Right cardiac atrium (tissue), 5 donors: ENCODE measurements at regions of chr7 and their contacts with region 1.

Region 1: DNA sequence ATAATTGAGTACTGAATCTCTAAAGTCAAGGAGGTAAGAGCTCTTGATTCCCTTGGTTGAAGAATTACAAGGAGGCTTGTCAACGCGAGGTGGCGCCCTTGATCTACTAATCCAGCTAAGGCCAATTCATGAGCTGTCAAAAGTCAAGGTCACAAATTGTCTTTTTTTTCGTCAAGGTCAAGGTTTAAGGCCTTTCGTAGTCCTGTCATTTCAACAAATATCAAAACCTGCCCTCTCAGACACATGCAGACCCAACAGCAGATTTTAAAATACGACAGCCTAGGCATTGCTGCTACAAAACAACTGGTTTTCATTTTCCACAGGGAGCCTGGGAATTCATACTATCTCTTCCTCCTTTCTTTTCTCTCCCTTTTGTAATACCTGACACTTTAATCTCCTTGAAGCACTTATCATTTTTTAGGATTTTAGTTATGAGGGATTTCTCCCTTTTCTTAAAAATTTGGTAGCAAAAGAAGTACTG is 3.6 kb downstream of the HOXA13 start:
- DNase-seq: peak; percentile 81 to 94 (median 90)
- ATAC-seq: no peak
- H3K4me3 ChIP-seq: no peak overlapping the region
- H3K27ac ChIP-seq: no peak overlapping the region
- H3K4me1 ChIP-seq: peaks cover 3% of the 10 kb centered on the region
- H3K27me3 ChIP-seq: no peaks in the 10 kb centered on the region

Region 2: GRCh38 chr7:26485367-26485934 is 710.9 kb before region 1 on chr7:
- intact Hi-C with region 1: no loop called
- DNase-seq: no peak
- ATAC-seq: no peak
- H3K4me3 ChIP-seq: no peak overlapping the region
- H3K27ac ChIP-seq: no peak overlapping the region
- H3K4me1 ChIP-seq: no peaks in the 10 kb centered on the region
- H3K27me3 ChIP-seq: no peaks in the 10 kb centered on the region

Region 3: DNA sequence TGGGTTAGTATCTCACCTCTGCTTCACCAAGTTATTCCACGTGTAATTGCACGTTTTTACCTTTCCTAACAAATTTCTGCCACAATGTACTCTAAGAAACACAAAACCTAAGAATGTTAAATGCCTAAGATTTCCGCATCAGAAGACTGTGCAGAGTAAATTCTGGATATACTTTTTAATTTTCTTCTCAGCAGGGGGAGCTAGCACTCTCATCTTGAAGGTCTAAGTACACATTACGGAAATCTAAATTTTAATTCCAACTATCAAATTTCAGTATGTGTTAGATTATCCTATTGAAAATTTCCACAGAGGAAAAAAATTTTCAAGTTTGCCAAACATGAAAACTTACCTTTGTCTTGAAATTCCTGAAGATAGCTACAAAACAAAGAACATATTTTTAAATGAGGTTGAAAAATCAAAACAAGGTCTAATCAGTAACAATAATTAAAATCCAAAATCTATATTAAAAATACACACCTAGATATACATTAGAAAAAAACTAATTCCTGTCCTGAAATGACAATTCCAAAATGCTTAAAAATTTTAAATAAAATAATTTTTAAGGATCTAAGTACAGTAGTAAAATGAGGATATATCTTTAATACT is 342.4 kb before region 1 on chr7:
- intact Hi-C with region 1: no loop called
- DNase-seq: no peak
- ATAC-seq: no peak
- H3K4me3 ChIP-seq: no peak overlapping the region
- H3K27ac ChIP-seq: no peak overlapping the region
- H3K4me1 ChIP-seq: no peaks in the 10 kb centered on the region
- H3K27me3 ChIP-seq: no peaks in the 10 kb centered on the region

Region 4: GRCh38 chr7:27134392-27134791 is 61.9 kb before region 1 on chr7:
- intact Hi-C with region 1: no loop called
- DNase-seq: no peak
- ATAC-seq: no peak
- H3K4me3 ChIP-seq: no peak overlapping the region
- H3K27ac ChIP-seq: no peak overlapping the region
- H3K4me1 ChIP-seq: no peaks in the 10 kb centered on the region
- H3K27me3 ChIP-seq: no peaks in the 10 kb centered on the region

Region 5: DNA sequence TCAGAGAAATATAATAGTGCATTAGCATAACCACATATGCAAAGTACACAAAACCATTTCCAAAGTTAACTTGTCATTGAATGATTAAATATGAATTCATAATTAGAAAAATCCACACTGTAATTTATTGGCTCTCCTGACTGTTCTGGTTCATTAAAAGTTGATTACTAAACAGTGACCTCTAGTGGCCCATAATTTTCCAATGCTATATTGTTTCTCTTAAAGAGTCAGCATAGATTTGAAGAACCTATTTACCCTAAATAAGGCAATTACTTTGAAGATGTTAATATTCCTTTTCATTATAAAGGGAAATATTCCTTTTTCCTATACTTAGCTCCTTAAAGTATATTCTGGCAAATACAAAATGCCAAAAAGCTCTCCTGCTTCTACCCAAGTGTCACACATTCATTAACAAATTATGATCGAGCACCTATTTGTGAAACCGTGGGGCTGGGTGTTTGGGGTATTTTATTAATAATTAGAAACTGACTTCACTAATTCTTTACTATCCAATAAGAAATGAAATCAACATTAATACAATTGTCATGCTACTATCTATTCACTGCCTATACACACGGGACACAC is 380.1 kb after region 1 on chr7:
- intact Hi-C with region 1: loop called in 1 of 4 experiments (anchors 5 kb)
- DNase-seq: no peak
- ATAC-seq: peak in 1 of 2 donors; percentile 57
- H3K4me3 ChIP-seq: no peak overlapping the region
- H3K27ac ChIP-seq: no peak overlapping the region
- H3K4me1 ChIP-seq: no peaks in the 10 kb centered on the region
- H3K27me3 ChIP-seq: no peaks in the 10 kb centered on the region

Region 6: DNA sequence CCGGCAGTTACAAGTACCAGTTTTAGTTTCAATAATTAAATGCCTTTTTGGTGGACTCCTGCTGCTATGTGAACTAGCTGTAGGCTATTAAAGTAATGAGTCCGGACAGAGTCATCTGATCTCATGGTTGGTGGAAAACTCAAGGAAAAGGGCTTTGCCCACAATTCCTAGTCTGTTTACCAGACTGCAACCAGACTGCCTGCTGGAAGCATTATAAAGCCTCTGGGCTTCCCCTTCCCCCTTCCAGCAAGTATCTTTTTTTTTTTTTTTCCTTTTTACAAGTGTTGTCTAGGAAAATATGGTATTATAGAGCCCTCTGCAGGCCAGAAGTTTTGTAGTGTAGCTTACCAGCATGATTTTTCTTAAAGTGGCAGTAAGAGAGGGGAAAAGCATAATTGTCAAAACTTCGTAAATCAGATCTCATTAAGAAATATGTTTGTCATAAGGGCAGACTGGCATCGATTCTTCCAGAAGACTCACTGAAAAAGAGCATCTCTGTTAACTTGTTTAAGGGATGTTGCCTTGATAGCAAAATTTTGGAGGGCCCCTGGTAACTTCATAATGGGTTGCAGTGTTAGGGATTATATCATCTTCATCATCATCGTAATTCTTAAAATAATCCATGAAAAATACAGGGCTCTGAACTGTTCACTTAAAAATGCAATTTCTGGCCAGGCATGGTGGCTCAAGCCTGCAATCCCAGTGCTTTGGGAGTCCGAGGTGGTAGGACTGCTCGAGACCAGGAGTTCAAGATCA is 724.9 kb after region 1 on chr7:
- intact Hi-C with region 1: loop called in 3 of 4 experiments (anchors 5 to 10 kb)
- DNase-seq: no peak
- ATAC-seq: peak; percentile 42 to 64
- H3K4me3 ChIP-seq: no peak overlapping the region
- H3K27ac ChIP-seq: no peak overlapping the region
- H3K4me1 ChIP-seq: peaks cover 9% of the 10 kb centered on the region
- H3K27me3 ChIP-seq: no peaks in the 10 kb centered on the region

Region 7: GRCh38 chr7:28020302-28020940 is 824.1 kb after region 1 on chr7:
- intact Hi-C with region 1: loop called in 2 of 4 experiments (anchors 5 to 10 kb)
- DNase-seq: peak; percentile 55 to 84 (median 77)
- ATAC-seq: peak; percentile 73 to 83
- H3K4me3 ChIP-seq: no peak overlapping the region
- H3K27ac ChIP-seq: no peak overlapping the region
- H3K4me1 ChIP-seq: peaks cover 9% of the 10 kb centered on the region
- H3K27me3 ChIP-seq: no peaks in the 10 kb centered on the region

Region 8: DNA sequence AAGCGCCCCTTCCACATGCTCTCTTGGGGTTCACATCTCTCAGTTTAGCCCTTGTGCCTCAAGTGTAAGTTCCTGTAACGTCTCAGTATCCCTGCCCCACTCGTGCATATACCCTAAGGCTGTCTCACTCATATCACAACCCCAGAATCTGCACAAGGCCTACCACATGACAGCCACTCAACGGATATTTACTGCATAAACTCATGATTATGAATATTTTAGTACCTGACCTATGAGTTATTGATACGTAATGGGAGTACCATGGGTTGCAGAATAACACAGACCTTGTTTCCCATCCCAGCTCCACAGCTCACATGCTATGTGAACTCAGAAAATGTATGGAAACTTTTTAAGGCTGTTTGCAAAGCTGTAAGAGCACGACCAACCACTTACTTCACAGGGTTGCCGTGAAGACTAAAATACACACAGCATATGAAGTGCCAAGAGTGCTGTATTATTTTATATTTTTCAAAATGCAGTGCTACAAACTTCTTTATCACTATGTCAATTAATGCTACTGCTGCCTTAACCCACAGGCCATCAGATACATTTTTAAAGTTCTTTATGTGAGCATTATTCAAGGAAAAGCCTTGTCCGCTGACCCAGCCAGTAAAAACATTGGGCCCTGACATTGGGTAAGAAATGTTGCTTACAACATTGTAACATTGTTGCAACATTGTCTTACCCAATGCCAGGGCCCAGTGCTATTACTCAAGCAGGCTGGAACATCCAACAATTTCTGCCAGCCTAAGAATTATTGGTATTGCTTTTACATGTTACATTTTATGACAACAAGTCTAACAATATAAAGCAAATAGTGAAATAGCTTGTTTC is 887.1 kb after region 1 on chr7:
- intact Hi-C with region 1: loop called in 1 of 4 experiments (anchors 10 kb)
- DNase-seq: peak in 1 of 3 donors; percentile 22
- ATAC-seq: peak; percentile 71 to 73
- H3K4me3 ChIP-seq: no peak overlapping the region
- H3K27ac ChIP-seq: no peak overlapping the region
- H3K4me1 ChIP-seq: peaks cover 8% of the 10 kb centered on the region
- H3K27me3 ChIP-seq: no peaks in the 10 kb centered on the region

Region 9: DNA sequence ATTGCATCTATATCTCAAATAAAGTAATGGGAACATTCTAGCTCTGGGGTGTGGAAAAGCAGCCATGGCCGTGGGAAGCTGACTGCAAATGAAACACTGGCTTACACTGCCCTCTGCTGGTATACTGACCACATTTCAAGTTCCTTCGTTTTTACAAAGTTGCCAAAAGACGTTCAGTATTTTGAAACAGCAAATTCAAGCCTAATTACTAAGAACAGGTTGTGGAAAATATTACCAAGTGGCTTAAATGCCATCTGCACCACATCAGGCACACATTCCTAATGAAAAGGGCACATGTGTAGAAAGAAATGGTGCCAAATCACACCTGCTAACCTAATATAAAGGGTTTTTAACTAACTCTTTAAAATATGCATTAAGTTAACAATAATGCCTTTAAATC is 900.4 kb after region 1 on chr7:
- intact Hi-C with region 1: loop called in 1 of 4 experiments (anchors 10 kb)
- DNase-seq: peak in 2 of 3 donors; percentile 33 to 50
- ATAC-seq: peak; percentile 71 to 74
- H3K4me3 ChIP-seq: no peak overlapping the region
- H3K27ac ChIP-seq: no peak overlapping the region
- H3K4me1 ChIP-seq: peaks cover 2% of the 10 kb centered on the region
- H3K27me3 ChIP-seq: no peaks in the 10 kb centered on the region